PC-9 (cell line): ENCODE measurements at regions of chr5 and their contacts with region 1.

Region 1: GRCh38 chr5:141835928-141836670 is 42.1 kb downstream of the PCDH1 start:
- DNase-seq: no peak
- H3K4me3 ChIP-seq: no peak overlapping the region
- H3K27ac ChIP-seq: no peak overlapping the region
- H3K4me1 ChIP-seq: peaks cover 44% of the 10 kb centered on the region
- H3K27me3 ChIP-seq: no peaks in the 10 kb centered on the region
- CTCF ChIP-seq: no peak

Region 2: GRCh38 chr5:141825791-141826560 is 10.1 kb before region 1 on chr5:
- CTCF ChIA-PET with region 1: interaction called, 10 read pairs
- POLR2A ChIA-PET with region 1: no interaction called
- intact Hi-C with region 1: no loop called
- DNase-seq: no peak
- H3K4me3 ChIP-seq: no peak overlapping the region
- H3K27ac ChIP-seq: no peak overlapping the region
- H3K4me1 ChIP-seq: peaks cover 6% of the 10 kb centered on the region
- H3K27me3 ChIP-seq: no peaks in the 10 kb centered on the region
- CTCF ChIP-seq: peak; percentile 59

Region 3: DNA sequence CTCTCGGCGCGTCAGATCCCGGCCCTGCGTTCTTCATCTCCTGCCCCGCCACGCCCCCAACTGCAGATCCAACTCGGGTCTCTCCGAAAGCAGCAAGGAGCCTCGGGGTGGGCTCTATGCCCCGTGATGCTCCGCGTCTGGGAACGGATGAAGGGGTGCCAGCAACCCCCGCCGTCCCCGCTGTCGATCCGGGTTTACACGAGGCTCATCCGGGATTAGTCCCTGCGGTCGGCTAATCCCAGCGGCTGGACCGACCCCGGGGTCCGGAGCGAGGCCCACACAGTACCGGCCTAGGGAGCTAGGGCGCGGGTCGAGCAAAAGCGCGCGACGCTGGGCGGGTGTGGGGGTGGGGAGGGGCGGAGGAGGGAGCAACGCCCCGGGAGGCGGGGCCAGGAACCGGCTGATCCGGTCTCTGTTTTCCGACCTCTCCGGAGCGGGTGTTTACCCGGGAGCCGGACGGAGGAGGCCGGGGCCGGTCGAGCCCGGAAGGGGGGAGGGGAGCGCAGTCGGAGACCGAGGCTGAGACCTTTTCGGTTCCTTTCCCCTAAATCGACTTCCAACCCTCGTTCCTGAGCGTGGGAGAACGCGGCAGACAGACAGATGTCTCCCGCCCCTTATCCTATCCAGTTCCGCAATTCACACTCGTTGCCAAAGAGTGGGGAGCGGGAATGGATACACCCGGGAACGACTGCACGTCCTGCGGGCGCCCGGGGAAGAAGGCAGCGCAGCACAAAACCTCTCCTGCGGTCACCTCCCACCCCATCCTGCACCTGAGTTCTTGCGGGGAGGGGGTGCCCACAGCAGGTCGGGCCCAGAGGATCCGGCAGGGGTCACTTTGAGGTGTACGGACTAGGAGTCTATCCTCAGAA is 13.5 kb after region 1 on chr5:
- CTCF ChIA-PET with region 1: interaction called, 3 read pairs
- POLR2A ChIA-PET with region 1: no interaction called
- intact Hi-C with region 1: loop called (anchors 1 kb)
- DNase-seq: peak; percentile 72 to 89
- H3K4me3 ChIP-seq: peak overlapping the region; percentile 98
- H3K27ac ChIP-seq: peak overlapping the region; percentile 99
- H3K4me1 ChIP-seq: peaks cover 41% of the 10 kb centered on the region
- H3K27me3 ChIP-seq: no peaks in the 10 kb centered on the region
- CTCF ChIP-seq: no peak

Region 4: GRCh38 chr5:141923448-141924352 is 87.6 kb after region 1 on chr5 and contains the start of gene DELE1:
- CTCF ChIA-PET with region 1: no interaction called
- POLR2A ChIA-PET with region 1: interaction called, 13 read pairs
- intact Hi-C with region 1: no loop called
- DNase-seq: peak; percentile 89 to 93
- H3K4me3 ChIP-seq: peak within 1 kb of the TSS; percentile 98
- H3K27ac ChIP-seq: peak within 1 kb of the TSS; percentile 86
- H3K4me1 ChIP-seq: peaks cover 12% of the 10 kb centered on the region
- H3K27me3 ChIP-seq: no peaks in the 10 kb centered on the region
- CTCF ChIP-seq: no peak
- total RNA-seq, gene DELE1: 68.5 and 80.8 TPM in 2 replicates